B cell (primary cell): ENCODE measurements at regions of chr3 and their contacts with region 1.

Region 1: DNA sequence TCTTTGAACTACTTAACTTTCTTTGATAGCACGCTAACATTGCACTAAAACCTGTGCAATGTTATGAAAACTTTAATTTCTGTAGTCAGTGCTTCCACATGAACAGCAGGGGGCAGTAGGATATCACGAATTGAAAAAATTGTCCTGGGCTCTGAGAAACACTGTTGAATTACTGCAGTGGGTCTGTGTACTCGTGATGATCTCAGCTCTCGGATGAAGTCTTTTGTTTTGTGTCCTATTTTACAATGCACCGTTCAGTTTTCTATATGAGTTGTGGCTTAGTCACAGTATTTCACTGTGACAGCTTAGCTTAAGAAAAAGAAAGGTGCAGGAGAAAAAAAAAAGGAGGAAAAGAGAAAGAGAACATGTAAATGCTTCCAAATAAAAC is 141.3 kb upstream of the CCDC54 start:
- DNase-seq: peak; percentile 78
- ATAC-seq: peak; percentile 63
- H3K4me3 ChIP-seq: peak overlapping the region in 4 of 5 experiments; percentile 2 to 35 (median 28)
- H3K4me3 Mint-ChIP-seq: peak overlapping the region; percentile 20
- H3K27ac ChIP-seq: no peak overlapping the region
- H3K27ac Mint-ChIP-seq: no peak overlapping the region
- H3K4me1 ChIP-seq: peaks cover 5 to 14% of the 10 kb centered on the region in 2 donors
- H3K4me1 Mint-ChIP-seq: peaks cover 15% of the 10 kb centered on the region
- H3K27me3 ChIP-seq: peaks cover 0 to 2% (median 0%) of the 10 kb centered on the region in 4 experiments
- H3K27me3 Mint-ChIP-seq: peaks cover 4% of the 10 kb centered on the region
- CTCF ChIP-seq: peak; percentile 98

Region 2: DNA sequence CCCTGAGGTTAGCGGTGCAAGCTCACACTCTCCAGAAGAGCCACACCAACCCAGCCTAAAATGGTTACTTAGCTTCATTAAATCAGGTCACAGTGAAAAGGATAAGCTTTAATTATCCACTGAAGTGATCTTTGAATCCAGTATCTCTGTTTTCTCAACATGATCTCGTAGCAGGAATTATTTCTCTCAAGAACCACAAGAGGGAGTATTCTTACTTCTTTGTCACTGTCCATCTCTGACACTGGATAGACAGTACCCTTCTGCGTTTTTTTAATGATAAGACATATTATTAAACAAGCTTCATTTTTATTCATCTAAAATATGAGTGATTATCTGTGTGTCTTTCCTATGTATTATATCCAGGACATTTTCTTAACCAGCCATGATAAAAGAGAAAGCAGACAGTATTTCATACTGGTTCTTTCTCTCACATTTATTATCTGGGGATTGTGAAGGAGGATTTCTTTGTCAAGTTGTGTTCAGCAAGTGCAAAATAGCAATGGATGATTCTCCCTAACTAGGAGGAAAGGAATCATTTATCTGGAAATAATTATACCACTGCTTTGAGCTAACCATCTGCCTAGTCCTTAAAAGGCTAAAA is 36.0 kb after region 1 on chr3:
- CTCF ChIA-PET with region 1: interaction called, 13 read pairs
- POLR2A ChIA-PET with region 1: no interaction called
- intact Hi-C with region 1: loop called (anchors 2 kb)
- DNase-seq: peak; percentile 46
- ATAC-seq: peak; percentile 45
- H3K4me3 ChIP-seq: no peak overlapping the region
- H3K4me3 Mint-ChIP-seq: no peak overlapping the region
- H3K27ac ChIP-seq: no peak overlapping the region
- H3K27ac Mint-ChIP-seq: no peak overlapping the region
- H3K4me1 ChIP-seq: no peaks in the 10 kb centered on the region
- H3K4me1 Mint-ChIP-seq: no peaks in the 10 kb centered on the region
- H3K27me3 ChIP-seq: peaks cover 0 to 2% (median 0%) of the 10 kb centered on the region in 4 experiments
- H3K27me3 Mint-ChIP-seq: peaks cover 15% of the 10 kb centered on the region
- CTCF ChIP-seq: peak; percentile 79

Region 3: GRCh38 chr3:107506458-107506857 is 270.5 kb after region 1 on chr3:
- CTCF ChIA-PET with region 1: no interaction called
- POLR2A ChIA-PET with region 1: no interaction called
- intact Hi-C with region 1: no loop called
- DNase-seq: no peak
- ATAC-seq: no peak
- H3K4me3 ChIP-seq: no peak overlapping the region
- H3K4me3 Mint-ChIP-seq: no peak overlapping the region
- H3K27ac ChIP-seq: no peak overlapping the region
- H3K27ac Mint-ChIP-seq: no peak overlapping the region
- H3K4me1 ChIP-seq: no peaks in the 10 kb centered on the region
- H3K4me1 Mint-ChIP-seq: no peaks in the 10 kb centered on the region
- H3K27me3 ChIP-seq: no peaks in the 10 kb centered on the region
- H3K27me3 Mint-ChIP-seq: peaks cover 2% of the 10 kb centered on the region
- CTCF ChIP-seq: no peak

Region 4: DNA sequence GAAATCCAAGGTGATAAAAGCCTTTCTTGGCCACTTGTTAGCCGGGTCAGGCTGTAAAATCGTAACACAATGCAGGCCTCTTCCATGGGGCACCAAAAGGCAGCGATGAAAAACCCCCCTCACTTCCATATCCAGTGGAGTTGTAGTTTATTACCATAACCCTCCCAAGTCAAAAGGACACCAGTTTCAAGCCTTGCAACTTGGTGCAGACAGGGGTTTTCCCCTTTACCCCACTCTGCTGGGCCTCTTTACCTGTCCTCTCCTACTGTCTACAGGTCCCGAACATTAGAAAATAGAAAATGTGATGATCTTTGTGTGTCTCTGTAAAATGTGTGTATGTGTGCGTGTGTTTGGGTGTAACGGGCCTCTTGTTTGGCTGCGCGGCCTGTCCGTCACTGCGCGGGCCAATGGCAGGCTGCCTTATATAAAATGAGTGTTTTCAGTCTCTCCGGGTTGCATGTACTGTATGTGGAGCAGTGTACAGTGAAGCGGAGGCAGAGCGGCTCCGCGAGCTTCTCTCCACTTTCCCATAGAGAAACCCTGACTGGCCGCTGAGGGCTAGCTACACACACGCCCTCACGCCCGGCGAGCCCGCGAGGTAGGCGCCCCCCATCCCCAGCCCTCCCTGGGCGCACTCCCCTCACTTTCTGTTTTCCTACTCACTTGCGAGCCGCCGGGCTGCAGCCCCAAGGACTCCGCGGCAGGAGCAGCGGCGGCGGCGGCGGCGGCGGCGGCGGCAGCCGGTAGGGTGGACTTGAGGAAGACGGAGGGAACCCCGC is 286.8 kb after region 1 on chr3 and contains the start of gene BBX:
- CTCF ChIA-PET with region 1: interaction called, 5 read pairs
- POLR2A ChIA-PET with region 1: no interaction called
- intact Hi-C with region 1: loop called (anchors 1 kb)
- DNase-seq: peak; percentile 97
- ATAC-seq: peak; percentile 84
- H3K4me3 ChIP-seq: peak within 1 kb of the TSS; percentile 74 to 96 (median 92)
- H3K4me3 Mint-ChIP-seq: peak within 1 kb of the TSS; percentile 98
- H3K27ac ChIP-seq: peak within 1 kb of the TSS; percentile 81 to 92
- H3K27ac Mint-ChIP-seq: peak within 1 kb of the TSS; percentile 99
- H3K4me1 ChIP-seq: peaks cover 24 to 27% of the 10 kb centered on the region in 2 donors
- H3K4me1 Mint-ChIP-seq: peaks cover 34% of the 10 kb centered on the region
- H3K27me3 ChIP-seq: no peaks in the 10 kb centered on the region
- H3K27me3 Mint-ChIP-seq: no peaks in the 10 kb centered on the region
- CTCF ChIP-seq: no peak
- total RNA-seq, gene BBX: 131 and 133 TPM in 2 replicates

Region 5: DNA sequence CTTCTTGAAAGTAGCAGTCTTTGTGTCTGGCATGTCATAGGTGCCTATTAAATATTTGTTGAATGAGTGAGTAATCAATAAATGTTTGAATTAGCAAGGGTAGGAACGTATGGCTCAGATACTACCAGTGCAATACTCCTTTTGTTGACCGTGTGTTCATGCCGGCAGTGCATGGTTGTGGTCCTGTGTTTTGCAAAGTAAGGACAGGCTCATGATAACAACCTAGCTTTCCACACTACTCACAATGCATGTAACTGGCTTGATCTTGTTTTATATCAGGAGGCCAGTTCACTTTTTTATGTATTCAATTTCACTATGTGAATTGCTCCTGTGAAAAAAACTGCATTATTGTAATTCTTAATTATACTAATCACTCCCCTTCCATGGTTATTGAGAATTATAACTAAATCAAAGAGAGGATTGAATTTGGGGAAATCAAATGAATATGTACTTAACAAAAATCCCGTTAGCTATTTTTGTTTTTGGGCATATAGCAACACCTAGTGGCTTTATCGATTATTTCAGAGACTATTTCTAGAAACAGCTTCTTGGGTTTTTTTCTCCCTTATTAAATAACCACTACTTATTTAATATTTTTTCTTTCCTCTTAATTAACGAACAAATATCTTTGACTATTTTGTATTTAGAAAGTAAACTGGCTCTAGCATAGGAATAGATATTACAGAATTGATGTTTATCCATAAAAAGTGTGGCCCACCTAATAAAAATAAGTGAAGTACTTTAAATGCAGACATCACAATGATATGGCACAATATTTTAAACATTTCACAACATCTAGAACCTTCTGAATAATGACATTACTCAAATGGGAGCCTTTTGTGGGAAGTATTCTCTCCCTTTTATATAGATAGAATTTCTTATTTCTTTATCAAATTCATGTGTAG is 505.3 kb after region 1 on chr3:
- CTCF ChIA-PET with region 1: interaction called, 28 read pairs
- POLR2A ChIA-PET with region 1: no interaction called
- intact Hi-C with region 1: loop called (anchors 1 kb)
- DNase-seq: peak; percentile 43
- ATAC-seq: no peak
- H3K4me3 ChIP-seq: no peak overlapping the region
- H3K4me3 Mint-ChIP-seq: no peak overlapping the region
- H3K27ac ChIP-seq: no peak overlapping the region
- H3K27ac Mint-ChIP-seq: no peak overlapping the region
- H3K4me1 ChIP-seq: peaks cover 18 to 21% of the 10 kb centered on the region in 2 donors
- H3K4me1 Mint-ChIP-seq: peaks cover 36% of the 10 kb centered on the region
- H3K27me3 ChIP-seq: no peaks in the 10 kb centered on the region
- H3K27me3 Mint-ChIP-seq: no peaks in the 10 kb centered on the region
- CTCF ChIP-seq: peak; percentile 76

Region 6: DNA sequence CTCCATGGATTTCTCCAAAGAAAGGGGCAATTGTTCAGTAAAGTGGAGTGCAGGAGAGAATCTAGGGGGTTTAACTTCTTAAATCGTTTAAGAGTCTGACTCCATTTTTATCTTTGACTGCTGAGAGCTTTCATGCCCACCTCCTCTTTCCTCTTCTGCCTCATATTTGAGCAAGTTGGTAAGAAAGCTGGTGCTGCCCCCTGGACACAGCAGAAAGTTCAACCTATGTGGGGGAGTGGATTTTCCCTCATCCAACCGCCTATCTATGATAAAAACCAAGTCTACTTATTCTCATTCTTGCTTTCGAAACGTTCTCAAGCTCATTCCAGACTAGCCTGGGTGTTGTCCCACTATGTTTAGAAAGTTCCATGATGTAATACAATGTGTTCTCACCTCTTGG is 1086.4 kb after region 1 on chr3:
- CTCF ChIA-PET with region 1: no interaction called
- POLR2A ChIA-PET with region 1: no interaction called
- intact Hi-C with region 1: no loop called
- DNase-seq: peak; percentile 55
- ATAC-seq: peak; percentile 73
- H3K4me3 ChIP-seq: no peak overlapping the region
- H3K4me3 Mint-ChIP-seq: no peak overlapping the region
- H3K27ac ChIP-seq: no peak overlapping the region
- H3K27ac Mint-ChIP-seq: no peak overlapping the region
- H3K4me1 ChIP-seq: no peaks in the 10 kb centered on the region
- H3K4me1 Mint-ChIP-seq: peaks cover 12% of the 10 kb centered on the region
- H3K27me3 ChIP-seq: no peaks in the 10 kb centered on the region
- H3K27me3 Mint-ChIP-seq: no peaks in the 10 kb centered on the region
- CTCF ChIP-seq: peak; percentile 52

Region 7: DNA sequence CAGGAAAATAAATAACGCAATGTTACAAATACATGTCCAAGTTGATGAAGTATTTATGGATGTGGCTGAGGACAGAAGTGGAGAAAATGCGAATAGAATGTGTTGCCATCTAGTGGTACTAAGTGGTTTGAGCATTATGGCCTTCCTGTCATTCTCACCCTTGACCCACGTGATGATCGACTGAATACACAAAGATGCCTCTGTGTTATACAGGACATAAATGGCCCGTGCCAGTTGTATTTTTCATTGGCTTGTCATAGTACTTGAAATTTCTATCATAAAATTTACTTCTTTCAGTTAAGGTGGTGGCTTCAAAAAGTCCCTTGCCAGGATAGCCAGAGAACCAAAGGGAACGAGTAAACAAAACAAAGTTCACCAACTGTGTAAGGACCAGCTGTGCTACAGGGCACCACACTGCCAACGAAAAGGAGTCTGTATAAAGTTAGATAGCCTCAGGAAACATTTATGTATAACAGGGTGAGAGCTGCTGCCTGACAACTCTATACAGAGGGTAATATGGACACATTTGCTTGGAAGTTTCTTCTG is 1170.8 kb after region 1 on chr3:
- CTCF ChIA-PET with region 1: interaction called, 3 read pairs
- POLR2A ChIA-PET with region 1: no interaction called
- intact Hi-C with region 1: loop called (anchors 2 kb)
- DNase-seq: peak; percentile 78
- ATAC-seq: peak; percentile 75
- H3K4me3 ChIP-seq: peak overlapping the region in 1 of 5 experiments; percentile 3
- H3K4me3 Mint-ChIP-seq: peak overlapping the region; percentile 54
- H3K27ac ChIP-seq: peak overlapping the region; percentile 16 to 49
- H3K27ac Mint-ChIP-seq: peak overlapping the region; percentile 82
- H3K4me1 ChIP-seq: peaks cover 26 to 27% of the 10 kb centered on the region in 2 donors
- H3K4me1 Mint-ChIP-seq: peaks cover 31% of the 10 kb centered on the region
- H3K27me3 ChIP-seq: no peaks in the 10 kb centered on the region
- H3K27me3 Mint-ChIP-seq: no peaks in the 10 kb centered on the region
- CTCF ChIP-seq: peak; percentile 79